Right lobe of liver (tissue), 6 donors: ENCODE measurements at regions of chr3 and their contacts with region 1.

Region 1: DNA sequence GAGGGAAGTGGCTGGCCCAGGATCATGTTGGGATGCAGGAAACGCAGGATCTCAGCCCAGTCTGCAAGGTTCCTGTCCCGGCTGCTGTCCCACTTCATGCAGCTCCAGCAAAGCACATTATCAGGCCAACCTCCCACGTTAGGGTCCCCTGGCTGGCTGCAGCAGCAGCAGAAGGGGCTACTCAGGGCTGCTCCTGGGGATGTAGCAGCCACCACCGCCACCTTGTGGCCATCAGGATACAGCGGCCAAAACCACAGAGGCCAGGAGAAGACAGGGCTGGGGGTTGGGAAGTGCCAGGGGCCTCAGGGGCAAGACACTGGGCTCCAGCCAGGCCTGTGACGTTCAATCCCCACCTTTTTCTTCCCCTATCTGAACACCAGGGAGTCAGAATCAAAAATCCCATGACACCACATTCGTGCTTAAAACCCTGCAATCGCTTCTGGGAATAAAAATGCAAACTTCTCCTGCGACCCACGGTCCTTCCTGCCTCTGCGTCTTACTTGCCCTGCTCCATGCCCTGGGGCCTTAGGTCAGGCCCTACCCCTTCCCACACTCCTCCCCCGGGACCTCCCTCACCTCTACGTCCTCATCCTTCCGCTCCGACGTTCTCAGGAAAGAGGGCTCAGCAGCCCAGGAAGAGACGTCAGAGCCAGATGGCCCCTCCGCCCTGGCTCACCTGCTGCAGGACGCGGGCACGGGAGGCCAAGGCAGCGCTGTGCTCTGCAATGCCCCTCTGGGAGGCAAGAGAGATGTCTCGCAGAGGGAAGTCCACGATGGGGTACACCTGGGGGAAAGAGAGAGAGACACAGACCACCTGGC is 21.5 kb downstream of the SSUH2 start:
- DNase-seq: peak; percentile 63 to 66 (median 63)
- ATAC-seq: peak; percentile 82 to 93 (median 92)
- H3K4me3 ChIP-seq: no peak overlapping the region
- H3K27ac ChIP-seq: no peak overlapping the region
- H3K4me1 ChIP-seq: no peaks in the 10 kb centered on the region
- H3K27me3 ChIP-seq: no peaks in the 10 kb centered on the region
- CTCF ChIP-seq: peak; percentile 88 to 92 (median 89)
- POLR2A ChIP-seq: no peak

Region 2: GRCh38 chr3:8436718-8437184 is 186.3 kb before region 1 on chr3:
- intact Hi-C with region 1: loop called (anchors 5 to 10 kb)
- DNase-seq: no peak
- ATAC-seq: peak in 2 of 4 donors; percentile 34 to 56
- H3K4me3 ChIP-seq: no peak overlapping the region
- H3K27ac ChIP-seq: peak overlapping the region in 1 of 3 donors; percentile 3
- H3K4me1 ChIP-seq: no peaks in the 10 kb centered on the region
- H3K27me3 ChIP-seq: no peaks in the 10 kb centered on the region
- CTCF ChIP-seq: no peak
- POLR2A ChIP-seq: no peak